ENCODE measurements at regions of chr22 and their contacts with region 1.

Region 1: DNA sequence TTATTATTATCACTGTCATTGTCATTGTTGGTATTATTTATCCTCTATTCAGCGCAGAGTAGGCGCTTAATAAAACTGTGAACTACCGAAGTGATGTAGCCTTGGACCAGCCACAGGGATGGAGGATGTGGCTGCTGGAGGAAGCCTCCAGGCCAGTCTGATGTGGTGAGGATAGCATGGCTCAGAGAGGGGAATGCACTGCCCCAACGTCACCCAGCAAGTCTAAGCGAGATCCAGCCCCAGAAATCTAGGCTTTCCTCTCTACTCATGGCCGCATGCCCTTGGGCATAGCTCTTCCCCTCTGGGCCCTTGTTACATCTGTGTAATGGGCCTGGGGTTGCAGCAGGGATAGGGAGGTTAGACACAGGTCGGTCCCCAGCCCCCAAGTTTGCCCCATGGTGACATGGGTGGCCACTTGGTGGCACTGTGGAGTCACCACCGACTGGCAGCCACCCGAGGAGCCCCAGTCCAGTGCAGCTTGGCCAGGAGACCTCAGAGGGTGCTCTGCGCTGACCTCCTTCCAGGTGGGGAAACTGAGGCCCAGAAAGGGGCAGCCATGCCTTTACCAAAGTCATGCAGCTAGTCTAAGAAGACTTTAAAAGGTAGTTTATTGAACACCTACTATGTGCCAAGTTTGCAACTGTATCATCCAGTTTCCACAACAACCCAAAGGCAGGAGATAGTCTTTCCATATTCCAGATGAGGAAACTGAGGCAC is 395.7 kb downstream of the MN1 start:
- DNase-seq: peak; percentile 69
- H3K4me3 Mint-ChIP-seq: no peak overlapping the region
- H3K27ac Mint-ChIP-seq: peak overlapping the region; percentile 70
- H3K4me1 Mint-ChIP-seq: peaks cover 16% of the 10 kb centered on the region
- H3K27me3 Mint-ChIP-seq: no peaks in the 10 kb centered on the region
- CTCF ChIP-seq: peak; percentile 87

Region 2: GRCh38 chr22:26672590-26673468 is 733.0 kb before region 1 on chr22:
- CTCF ChIA-PET with region 1: no interaction called
- POLR2A ChIA-PET with region 1: no interaction called
- intact Hi-C with region 1: loop called (anchors 10 kb)
- DNase-seq: peak; percentile 94
- H3K4me3 Mint-ChIP-seq: peak overlapping the region; percentile 89
- H3K27ac Mint-ChIP-seq: peak overlapping the region; percentile 99
- H3K4me1 Mint-ChIP-seq: peaks cover 37% of the 10 kb centered on the region
- H3K27me3 Mint-ChIP-seq: no peaks in the 10 kb centered on the region
- CTCF ChIP-seq: peak; percentile 37

Region 3: GRCh38 chr22:27252282-27253049 is 153.4 kb before region 1 on chr22:
- CTCF ChIA-PET with region 1: no interaction called
- POLR2A ChIA-PET with region 1: no interaction called
- intact Hi-C with region 1: no loop called
- DNase-seq: peak; percentile 75
- H3K4me3 Mint-ChIP-seq: no peak overlapping the region
- H3K27ac Mint-ChIP-seq: no peak overlapping the region
- H3K4me1 Mint-ChIP-seq: no peaks in the 10 kb centered on the region
- H3K27me3 Mint-ChIP-seq: no peaks in the 10 kb centered on the region
- CTCF ChIP-seq: no peak

Region 4: GRCh38 chr22:27420817-27421361 is 15.1 kb after region 1 on chr22:
- CTCF ChIA-PET with region 1: interaction called, 48 read pairs
- POLR2A ChIA-PET with region 1: interaction called, 3 read pairs
- intact Hi-C with region 1: no loop called
- DNase-seq: peak; percentile 96
- H3K4me3 Mint-ChIP-seq: peak overlapping the region; percentile 65
- H3K27ac Mint-ChIP-seq: peak overlapping the region; percentile 90
- H3K4me1 Mint-ChIP-seq: peaks cover 46% of the 10 kb centered on the region
- H3K27me3 Mint-ChIP-seq: no peaks in the 10 kb centered on the region
- CTCF ChIP-seq: no peak

Region 5: GRCh38 chr22:27718186-27719032 is 312.6 kb after region 1 on chr22:
- CTCF ChIA-PET with region 1: interaction called, 3 read pairs
- POLR2A ChIA-PET with region 1: no interaction called
- intact Hi-C with region 1: loop called (anchors 10 kb)
- DNase-seq: peak; percentile 91
- H3K4me3 Mint-ChIP-seq: peak overlapping the region; percentile 24
- H3K27ac Mint-ChIP-seq: peak overlapping the region; percentile 98
- H3K4me1 Mint-ChIP-seq: peaks cover 30% of the 10 kb centered on the region
- H3K27me3 Mint-ChIP-seq: no peaks in the 10 kb centered on the region
- CTCF ChIP-seq: no peak

Region 6: GRCh38 chr22:28009272-28009827 is 603.5 kb after region 1 on chr22:
- CTCF ChIA-PET with region 1: no interaction called
- POLR2A ChIA-PET with region 1: no interaction called
- intact Hi-C with region 1: loop called (anchors 5 kb)
- DNase-seq: peak; percentile 73
- H3K4me3 Mint-ChIP-seq: no peak overlapping the region
- H3K27ac Mint-ChIP-seq: no peak overlapping the region
- H3K4me1 Mint-ChIP-seq: no peaks in the 10 kb centered on the region
- H3K27me3 Mint-ChIP-seq: no peaks in the 10 kb centered on the region
- CTCF ChIP-seq: peak; percentile 97